Heart right ventricle (tissue), 16 donors: ENCODE measurements at regions of chr9 and their contacts with region 1.

Region 1: DNA sequence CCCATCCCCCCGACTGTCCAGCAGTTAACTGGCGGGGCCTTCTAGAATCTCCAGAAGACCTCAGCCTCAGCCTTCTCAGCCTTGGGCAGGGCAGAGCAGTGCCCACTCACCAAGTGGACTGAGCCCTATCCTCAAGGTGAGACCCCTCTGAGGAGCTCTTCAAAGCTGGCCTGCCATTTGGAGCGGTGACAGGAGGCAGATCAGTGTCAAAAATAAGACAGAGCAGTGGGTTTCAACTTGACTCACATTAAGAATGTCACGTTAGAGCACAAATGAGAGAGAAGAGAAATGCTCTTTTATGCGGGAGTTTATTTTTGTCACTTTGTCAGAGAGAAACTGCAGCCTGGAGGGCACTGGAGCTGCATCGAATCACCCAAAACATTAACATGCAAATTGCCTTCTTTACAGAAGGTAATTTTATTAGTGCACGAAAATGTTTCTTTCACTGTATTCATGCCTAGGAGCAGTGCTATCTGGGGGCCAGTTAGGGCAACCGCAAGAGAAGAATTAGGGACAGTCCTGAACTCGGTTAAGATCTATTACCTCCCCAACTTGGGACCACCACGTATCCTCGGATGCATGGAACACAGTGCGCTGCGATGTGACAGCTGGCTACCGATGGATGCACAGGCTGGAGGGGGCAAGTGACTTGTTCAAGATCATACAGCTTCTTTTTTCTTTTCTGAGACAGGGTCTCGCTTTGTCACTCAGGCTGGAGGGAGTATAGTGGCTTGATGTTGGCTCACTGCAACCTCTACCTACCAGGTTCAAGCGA is 188.5 kb downstream of the DAB2IP start:
- DNase-seq: no peak
- ATAC-seq: no peak
- H3K4me3 ChIP-seq: no peak overlapping the region
- H3K27ac ChIP-seq: no peak overlapping the region
- H3K4me1 ChIP-seq: peaks cover 0 to 21% (median 5%) of the 10 kb centered on the region in 9 donors
- H3K27me3 ChIP-seq: no peaks in the 10 kb centered on the region
- CTCF ChIP-seq: no peak

Region 2: GRCh38 chr9:121798941-121799340 is 41.0 kb before region 1 on chr9:
- intact Hi-C with region 1: loop called in 1 of 10 experiments (anchors 5 kb)
- DNase-seq: no peak
- ATAC-seq: no peak
- H3K4me3 ChIP-seq: no peak overlapping the region
- H3K27ac ChIP-seq: no peak overlapping the region
- H3K4me1 ChIP-seq: no peaks in the 10 kb centered on the region
- H3K27me3 ChIP-seq: peaks cover 0 to 5% (median 0%) of the 10 kb centered on the region in 7 donors
- CTCF ChIP-seq: no peak